Heart left ventricle (tissue), 16 donors: ENCODE measurements at regions of chr4 and their contacts with region 1.

Region 1: DNA sequence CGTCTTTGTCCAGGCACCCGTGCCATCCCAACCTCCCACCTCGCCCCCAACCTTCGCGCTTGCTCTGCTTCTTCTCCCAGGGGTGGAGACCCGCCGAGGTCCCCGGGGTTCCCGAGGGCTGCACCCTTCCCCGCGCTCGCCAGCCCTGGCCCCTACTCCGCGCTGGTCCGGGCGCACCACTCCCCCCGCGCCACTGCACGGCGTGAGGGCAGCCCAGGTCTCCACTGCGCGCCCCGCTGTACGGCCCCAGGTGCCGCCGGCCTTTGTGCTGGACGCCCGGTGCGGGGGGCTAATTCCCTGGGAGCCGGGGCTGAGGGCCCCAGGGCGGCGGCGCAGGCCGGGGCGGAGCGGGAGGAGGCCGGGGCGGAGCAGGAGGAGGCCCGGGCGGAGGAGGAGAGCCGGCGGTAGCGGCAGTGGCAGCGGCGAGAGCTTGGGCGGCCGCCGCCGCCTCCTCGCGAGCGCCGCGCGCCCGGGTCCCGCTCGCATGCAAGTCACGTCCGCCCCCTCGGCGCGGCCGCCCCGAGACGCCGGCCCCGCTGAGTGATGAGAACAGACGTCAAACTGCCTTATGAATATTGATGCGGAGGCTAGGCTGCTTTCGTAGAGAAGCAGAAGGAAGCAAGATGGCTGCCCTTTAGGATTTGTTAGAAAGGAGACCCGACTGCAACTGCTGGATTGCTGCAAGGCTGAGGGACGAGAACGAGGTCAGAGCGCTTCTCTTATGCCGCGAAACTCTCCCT is at the start of gene TET2:
- DNase-seq: peak; percentile 80 to 91 (median 84)
- ATAC-seq: peak; percentile 84 to 95 (median 92)
- H3K4me3 ChIP-seq: peak within 1 kb of the TSS; percentile 74 to 93 (median 79)
- H3K27ac ChIP-seq: peak within 1 kb of the TSS; percentile 76 to 97 (median 86)
- H3K4me1 ChIP-seq: peaks cover 0 to 48% (median 26%) of the 10 kb centered on the region in 12 donors
- H3K27me3 ChIP-seq: no peaks in the 10 kb centered on the region
- CTCF ChIP-seq: peak in 1 of 12 donors; percentile 16
- POLR2A ChIP-seq: peak in 1 of 2 donors; percentile 74
- total RNA-seq, gene TET2: 9.5 to 25.6 (median 15.4) TPM

Region 2: GRCh38 chr4:104930298-104930697 is 216.1 kb before region 1 on chr4:
- intact Hi-C with region 1: no loop called
- DNase-seq: no peak
- ATAC-seq: no peak
- H3K4me3 ChIP-seq: no peak overlapping the region
- H3K27ac ChIP-seq: no peak overlapping the region
- H3K4me1 ChIP-seq: peaks cover 0 to 11% (median 0%) of the 10 kb centered on the region in 12 donors
- H3K27me3 ChIP-seq: no peaks in the 10 kb centered on the region
- CTCF ChIP-seq: no peak
- POLR2A ChIP-seq: no peak

Region 3: GRCh38 chr4:105158837-105159236 is 12.4 kb after region 1 on chr4:
- intact Hi-C with region 1: no loop called
- DNase-seq: peak in 2 of 5 donors; percentile 39 to 48
- ATAC-seq: peak; percentile 71 to 91 (median 84)
- H3K4me3 ChIP-seq: no peak overlapping the region
- H3K27ac ChIP-seq: no peak overlapping the region
- H3K4me1 ChIP-seq: peaks cover 0 to 55% (median 14%) of the 10 kb centered on the region in 12 donors
- H3K27me3 ChIP-seq: no peaks in the 10 kb centered on the region
- CTCF ChIP-seq: no peak
- POLR2A ChIP-seq: no peak

Region 4: DNA sequence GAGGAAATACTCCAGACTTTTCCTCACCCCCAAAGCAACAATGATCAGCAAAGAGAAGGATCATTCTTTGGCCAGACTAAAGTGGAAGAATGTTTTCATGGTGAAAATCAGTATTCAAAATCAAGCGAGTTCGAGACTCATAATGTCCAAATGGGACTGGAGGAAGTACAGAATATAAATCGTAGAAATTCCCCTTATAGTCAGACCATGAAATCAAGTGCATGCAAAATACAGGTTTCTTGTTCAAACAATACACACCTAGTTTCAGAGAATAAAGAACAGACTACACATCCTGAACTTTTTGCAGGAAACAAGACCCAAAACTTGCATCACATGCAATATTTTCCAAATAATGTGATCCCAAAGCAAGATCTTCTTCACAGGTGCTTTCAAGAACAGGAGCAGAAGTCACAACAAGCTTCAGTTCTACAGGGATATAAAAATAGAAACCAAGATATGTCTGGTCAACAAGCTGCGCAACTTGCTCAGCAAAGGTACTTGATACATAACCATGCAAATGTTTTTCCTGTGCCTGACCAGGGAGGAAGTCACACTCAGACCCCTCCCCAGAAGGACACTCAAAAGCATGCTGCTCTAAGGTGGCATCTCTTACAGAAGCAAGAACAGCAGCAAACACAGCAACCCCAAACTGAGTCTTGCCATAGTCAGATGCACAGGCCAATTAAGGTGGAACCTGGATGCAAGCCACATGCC is 89.9 kb after region 1 on chr4:
- intact Hi-C with region 1: loop called in 5 of 10 experiments (anchors 10 kb)
- DNase-seq: no peak
- ATAC-seq: peak in 1 of 4 donors; percentile 17
- H3K4me3 ChIP-seq: no peak overlapping the region
- H3K27ac ChIP-seq: no peak overlapping the region
- H3K4me1 ChIP-seq: peaks cover 0 to 16% (median 4%) of the 10 kb centered on the region in 12 donors
- H3K27me3 ChIP-seq: no peaks in the 10 kb centered on the region
- CTCF ChIP-seq: no peak
- POLR2A ChIP-seq: no peak

Region 5: GRCh38 chr4:105265689-105266088 is 119.2 kb after region 1 on chr4:
- intact Hi-C with region 1: loop called in 2 of 10 experiments (anchors 10 kb)
- DNase-seq: no peak
- ATAC-seq: no peak
- H3K4me3 ChIP-seq: no peak overlapping the region
- H3K27ac ChIP-seq: no peak overlapping the region
- H3K4me1 ChIP-seq: no peaks in the 10 kb centered on the region
- H3K27me3 ChIP-seq: no peaks in the 10 kb centered on the region
- CTCF ChIP-seq: no peak
- POLR2A ChIP-seq: no peak

Region 6: GRCh38 chr4:105352826-105353225 is 206.4 kb after region 1 on chr4:
- intact Hi-C with region 1: loop called in 1 of 10 experiments (anchors 10 kb)
- DNase-seq: no peak
- ATAC-seq: peak in 1 of 4 donors; percentile 36
- H3K4me3 ChIP-seq: no peak overlapping the region
- H3K27ac ChIP-seq: no peak overlapping the region
- H3K4me1 ChIP-seq: peaks cover 0 to 16% (median 0%) of the 10 kb centered on the region in 12 donors
- H3K27me3 ChIP-seq: no peaks in the 10 kb centered on the region
- CTCF ChIP-seq: no peak
- POLR2A ChIP-seq: no peak

Region 7: DNA sequence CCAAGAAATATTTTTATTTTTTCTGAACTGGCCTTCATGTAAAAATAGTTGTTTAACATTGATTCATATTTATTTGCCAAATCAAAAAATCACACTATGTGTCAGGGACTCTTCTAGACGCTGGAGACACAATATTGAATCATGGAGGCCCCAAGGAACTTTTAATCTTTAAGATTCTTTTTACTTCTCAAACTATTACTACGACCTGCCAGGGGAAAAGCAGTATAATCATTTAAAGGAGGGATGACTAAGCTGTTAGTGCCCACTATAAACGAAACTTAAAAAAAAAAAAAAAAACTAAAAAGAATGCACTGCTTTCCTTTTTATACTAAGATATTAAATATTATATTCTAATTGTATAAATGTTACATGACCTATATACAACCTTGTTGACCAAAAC is 242.7 kb after region 1 on chr4:
- intact Hi-C with region 1: loop called in 1 of 10 experiments (anchors 10 kb)
- DNase-seq: no peak
- ATAC-seq: no peak
- H3K4me3 ChIP-seq: no peak overlapping the region
- H3K27ac ChIP-seq: no peak overlapping the region
- H3K4me1 ChIP-seq: peaks cover 0 to 7% (median 0%) of the 10 kb centered on the region in 12 donors
- H3K27me3 ChIP-seq: no peaks in the 10 kb centered on the region
- CTCF ChIP-seq: no peak
- POLR2A ChIP-seq: no peak

Region 8: GRCh38 chr4:105708530-105709391 is 562.3 kb after region 1 on chr4 and contains the starts of genes GSTCD and INTS12:
- intact Hi-C with region 1: loop called in 5 of 10 experiments (anchors 5 to 10 kb)
- DNase-seq: peak; percentile 91 to 93 (median 92)
- ATAC-seq: peak; percentile 95 to 99 (median 98)
- H3K4me3 ChIP-seq: peak within 1 kb of the TSS; percentile 70 to 97 (median 90)
- H3K27ac ChIP-seq: peak within 1 kb of the TSS; percentile 47 to 90 (median 86)
- H3K4me1 ChIP-seq: peaks cover 0 to 30% (median 18%) of the 10 kb centered on the region in 12 donors
- H3K27me3 ChIP-seq: no peaks in the 10 kb centered on the region
- CTCF ChIP-seq: no peak
- POLR2A ChIP-seq: peak in 1 of 2 donors; percentile 63
- total RNA-seq, gene GSTCD: 2.4 to 6.4 (median 5.0) TPM
- total RNA-seq, gene INTS12: 19.2 to 27.9 (median 22.2) TPM